SK-N-SH (cell line): ENCODE measurements at regions of chr5 and their contacts with region 1.

Region 1: GRCh38 chr5:14118527-14119320 is 24.4 kb upstream of the TRIO start:
- DNase-seq: no peak
- H3K4me3 ChIP-seq: no peak overlapping the region
- H3K27ac ChIP-seq: no peak overlapping the region
- H3K4me1 ChIP-seq: peaks cover 0 to 8% of the 10 kb centered on the region in 2 experiments; a peak in 1 of 4 replicates
- H3K27me3 ChIP-seq: no peaks in the 10 kb centered on the region
- CTCF ChIP-seq: no peak
- EP300 ChIP-seq: no peak
- RAD21 ChIP-seq: no peak

Region 2: DNA sequence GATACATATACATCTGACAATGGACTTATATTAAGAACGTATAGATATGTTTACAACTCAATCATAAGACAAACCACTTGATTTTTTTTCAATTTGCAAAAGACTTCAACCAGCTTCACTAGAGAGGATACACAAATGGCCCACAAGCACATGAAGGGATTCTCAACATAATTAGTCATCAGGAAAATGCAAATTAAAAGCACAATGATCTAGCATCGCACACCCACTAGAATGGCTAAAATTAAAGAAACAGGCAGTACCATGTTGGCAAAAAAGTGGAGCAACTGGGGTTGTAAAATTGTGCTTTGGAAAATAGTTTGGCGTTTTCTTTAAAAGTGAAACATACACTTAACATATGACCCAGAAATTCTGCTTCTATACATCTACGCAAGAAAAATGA is 55.6 kb before region 1 on chr5:
- CTCF ChIA-PET with region 1: no interaction called
- POLR2A ChIA-PET with region 1: no interaction called
- DNase-seq: no peak
- H3K4me3 ChIP-seq: no peak overlapping the region
- H3K27ac ChIP-seq: peak overlapping the region in 1 of 2 experiments; percentile 20; a peak in 1 of 4 replicates
- H3K4me1 ChIP-seq: peaks cover 0 to 13% of the 10 kb centered on the region in 2 experiments; a peak in 1 of 4 replicates
- H3K27me3 ChIP-seq: no peaks in the 10 kb centered on the region
- CTCF ChIP-seq: no peak
- EP300 ChIP-seq: no peak
- RAD21 ChIP-seq: no peak

Region 3: DNA sequence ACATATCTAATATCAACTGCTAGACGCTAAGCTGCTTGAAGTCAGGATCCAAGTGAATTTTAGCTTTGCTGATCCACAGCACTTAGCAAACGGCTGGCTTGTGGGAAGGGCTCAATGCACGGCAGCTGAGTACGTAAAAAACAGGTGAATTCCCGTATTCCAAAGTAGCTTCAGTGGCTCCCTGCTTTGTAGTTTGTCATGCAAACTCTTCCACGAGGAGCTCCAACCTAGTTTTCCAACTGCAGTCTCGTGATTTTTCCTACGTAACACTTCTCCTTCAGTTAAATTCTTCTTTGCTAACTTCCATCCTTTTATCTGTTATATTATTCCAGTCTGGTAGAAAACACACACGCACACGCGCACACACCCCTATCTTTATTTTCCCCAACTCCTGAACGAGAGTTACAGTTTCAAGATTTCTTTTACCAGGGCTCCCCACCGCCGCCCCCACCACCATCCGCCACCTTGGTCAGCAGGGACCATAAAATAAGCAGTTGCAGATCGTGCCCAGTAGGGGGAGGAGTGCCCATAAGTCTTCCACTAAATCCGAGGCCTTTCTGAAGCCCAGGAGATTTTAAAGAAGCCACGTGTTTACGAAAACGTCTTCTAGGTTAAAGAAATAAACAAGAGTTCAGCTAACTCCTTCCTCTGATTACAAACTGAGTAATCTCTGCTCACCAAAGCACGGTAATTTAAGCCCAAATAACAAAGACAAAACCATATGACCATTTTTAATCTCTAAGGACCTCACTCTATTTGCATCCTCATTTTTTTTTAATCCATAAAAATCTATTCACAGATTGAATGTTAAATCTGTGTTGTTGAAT is 10.3 kb before region 1 on chr5:
- CTCF ChIA-PET with region 1: interaction called, 36 read pairs
- POLR2A ChIA-PET with region 1: no interaction called
- DNase-seq: peak; percentile 72
- H3K4me3 ChIP-seq: no peak overlapping the region; a peak in 1 of 4 replicates
- H3K27ac ChIP-seq: peak overlapping the region in 1 of 2 experiments; percentile 11; a peak in 1 of 4 replicates
- H3K4me1 ChIP-seq: peaks cover 0 to 28% of the 10 kb centered on the region in 2 experiments; a peak in 1 of 4 replicates
- H3K27me3 ChIP-seq: no peaks in the 10 kb centered on the region
- CTCF ChIP-seq: peak; percentile 63
- EP300 ChIP-seq: no peak
- RAD21 ChIP-seq: peak; percentile 84

Region 4: GRCh38 chr5:14142827-14143548 is 24.3 kb after region 1 on chr5 and contains the start of gene TRIO:
- CTCF ChIA-PET with region 1: interaction called, 12 read pairs
- POLR2A ChIA-PET with region 1: no interaction called
- DNase-seq: peak; percentile 97
- H3K4me3 ChIP-seq: peak within 1 kb of the TSS; percentile 94 to 95
- H3K27ac ChIP-seq: peak within 1 kb of the TSS; percentile 87 to 93
- H3K4me1 ChIP-seq: peaks cover 23 to 24% of the 10 kb centered on the region in 2 experiments; a peak in 3 of 4 replicates
- H3K27me3 ChIP-seq: no peaks in the 10 kb centered on the region
- CTCF ChIP-seq: peak; percentile 56
- EP300 ChIP-seq: peak in 1 of 2 experiments; percentile 40; a peak in 1 of 4 replicates
- RAD21 ChIP-seq: peak; percentile 24
- polyA plus RNA-seq, gene TRIO: 225 and 229 TPM in 2 replicates